ENCODE measurements at regions of chr2 and their contacts with region 1.

Region 1: GRCh38 chr2:159131914-159132281 is 154.6 kb downstream of the WDSUB1 start:
- DNase-seq: no peak
- ATAC-seq: peak; percentile 26 to 30
- H3K4me3 ChIP-seq: no peak overlapping the region
- H3K27ac ChIP-seq: peak overlapping the region; percentile 83
- H3K4me1 ChIP-seq: peaks cover 17% of the 10 kb centered on the region
- H3K27me3 ChIP-seq: no peaks in the 10 kb centered on the region

Region 2: DNA sequence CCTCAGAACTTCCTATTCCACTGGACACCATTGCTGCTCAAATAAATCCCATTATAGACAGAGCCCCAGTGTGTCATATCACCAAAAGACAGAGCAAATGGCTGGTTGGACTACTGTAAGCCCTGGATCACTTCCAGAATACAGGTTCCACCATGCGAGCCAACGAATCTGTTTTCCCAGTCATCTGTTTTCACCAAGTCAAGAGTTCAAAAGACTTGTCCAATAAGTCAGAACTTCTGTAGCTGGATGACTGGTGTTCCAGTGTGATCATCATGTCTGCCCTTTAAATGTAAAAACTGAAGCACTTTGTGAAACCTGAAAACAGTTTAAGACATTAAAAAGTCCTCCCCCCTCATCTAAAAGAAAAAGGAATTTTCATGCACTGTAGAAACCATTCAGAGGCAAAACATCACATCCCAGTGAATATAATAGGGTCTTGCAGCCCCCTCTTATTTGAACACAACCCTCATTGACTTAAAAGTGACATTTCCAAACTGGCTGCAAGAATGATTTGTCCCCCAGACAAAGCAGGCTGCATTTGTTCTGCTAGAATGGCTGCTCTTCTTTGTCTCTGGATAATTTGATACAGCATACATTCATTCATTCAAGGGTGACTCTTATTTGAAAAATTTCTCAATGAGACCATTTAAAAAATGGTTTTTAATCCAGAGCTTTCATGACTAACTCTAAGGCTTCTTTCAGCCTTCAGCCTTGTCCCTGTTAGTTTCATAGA is 228.0 kb before region 1 on chr2:
- intact Hi-C with region 1: loop called in 1 of 4 experiments (anchors 5 kb)
- DNase-seq: no peak
- ATAC-seq: no peak
- H3K4me3 ChIP-seq: no peak overlapping the region
- H3K27ac ChIP-seq: no peak overlapping the region
- H3K4me1 ChIP-seq: peaks cover 2% of the 10 kb centered on the region
- H3K27me3 ChIP-seq: no peaks in the 10 kb centered on the region

Region 3: GRCh38 chr2:159379181-159379580 is 247.3 kb after region 1 on chr2:
- intact Hi-C with region 1: no loop called
- DNase-seq: no peak
- ATAC-seq: no peak
- H3K4me3 ChIP-seq: no peak overlapping the region
- H3K27ac ChIP-seq: no peak overlapping the region
- H3K4me1 ChIP-seq: no peaks in the 10 kb centered on the region
- H3K27me3 ChIP-seq: no peaks in the 10 kb centered on the region

Measured in right cardiac atrium (tissue), 5 donors.